Activated CD8-positive, alpha-beta T cell treated with anti-CD3 and anti-CD28 coated beads for 36 hours (primary cell): ENCODE measurements at regions of chr18 and their contacts with region 1.

Region 1: DNA sequence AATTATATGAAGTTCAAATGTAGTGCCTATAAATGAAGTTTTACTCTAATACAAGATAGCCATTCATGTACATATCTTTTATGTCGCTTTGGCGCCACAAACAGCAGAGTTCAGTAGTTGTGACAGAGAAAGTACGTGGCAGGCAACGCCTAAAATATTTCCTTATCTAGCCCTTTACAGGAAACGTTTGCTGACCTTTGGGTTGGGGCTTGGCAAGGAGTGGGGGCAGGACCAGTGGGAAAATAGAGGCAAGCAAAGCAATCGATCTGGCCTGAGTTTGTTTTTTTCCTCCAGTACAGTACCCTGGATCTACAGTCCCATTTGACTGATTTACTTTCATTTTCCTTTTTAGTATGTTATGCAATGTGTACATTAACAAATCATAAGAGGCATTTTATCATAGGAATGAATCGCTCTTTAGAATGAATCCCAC is 13.1 kb downstream of the CCDC68 start:
- DNase-seq: peak; percentile 16
- ATAC-seq: peak; percentile 81
- H3K4me3 Mint-ChIP-seq: peak overlapping the region; percentile 71
- H3K27ac Mint-ChIP-seq: peak overlapping the region; percentile 70
- H3K4me1 Mint-ChIP-seq: peaks cover 13% of the 10 kb centered on the region
- H3K27me3 Mint-ChIP-seq: peaks cover 2% of the 10 kb centered on the region
- CTCF ChIP-seq: no peak

Region 2: DNA sequence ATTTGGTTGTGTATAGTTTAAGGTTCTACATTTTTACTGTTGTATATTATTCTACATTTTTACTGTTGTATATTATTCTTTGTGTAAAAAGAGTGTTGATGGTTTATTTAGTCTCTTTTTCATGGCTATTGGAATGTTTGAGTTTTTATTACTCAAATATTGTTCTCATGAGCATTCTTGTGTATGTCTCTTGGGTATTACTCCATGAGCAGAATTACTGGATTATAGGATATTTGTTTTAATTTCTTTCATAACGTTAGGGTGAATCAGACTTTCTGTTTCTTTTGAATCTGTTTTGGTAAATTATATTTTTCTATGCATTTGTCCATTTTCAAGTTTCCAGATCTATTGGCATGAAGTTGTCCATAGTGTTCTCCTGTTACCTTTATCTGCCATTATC is 243.5 kb before region 1 on chr18:
- CTCF ChIA-PET with region 1: no interaction called
- POLR2A ChIA-PET with region 1: no interaction called
- intact Hi-C with region 1: loop called (anchors 10 kb)
- DNase-seq: no peak
- ATAC-seq: no peak
- H3K4me3 Mint-ChIP-seq: no peak overlapping the region
- H3K27ac Mint-ChIP-seq: no peak overlapping the region
- H3K4me1 Mint-ChIP-seq: no peaks in the 10 kb centered on the region
- H3K27me3 Mint-ChIP-seq: no peaks in the 10 kb centered on the region
- CTCF ChIP-seq: no peak

Region 3: GRCh38 chr18:55054021-55054990 is 108.1 kb after region 1 on chr18:
- CTCF ChIA-PET with region 1: no interaction called
- POLR2A ChIA-PET with region 1: no interaction called
- intact Hi-C with region 1: no loop called
- DNase-seq: no peak
- ATAC-seq: no peak
- H3K4me3 Mint-ChIP-seq: no peak overlapping the region
- H3K27ac Mint-ChIP-seq: no peak overlapping the region
- H3K4me1 Mint-ChIP-seq: no peaks in the 10 kb centered on the region
- H3K27me3 Mint-ChIP-seq: peaks cover 2% of the 10 kb centered on the region
- CTCF ChIP-seq: no peak